CD4-positive, alpha-beta T cell (primary cell): ENCODE measurements at regions of chr12 and their contacts with region 1.

Region 1: DNA sequence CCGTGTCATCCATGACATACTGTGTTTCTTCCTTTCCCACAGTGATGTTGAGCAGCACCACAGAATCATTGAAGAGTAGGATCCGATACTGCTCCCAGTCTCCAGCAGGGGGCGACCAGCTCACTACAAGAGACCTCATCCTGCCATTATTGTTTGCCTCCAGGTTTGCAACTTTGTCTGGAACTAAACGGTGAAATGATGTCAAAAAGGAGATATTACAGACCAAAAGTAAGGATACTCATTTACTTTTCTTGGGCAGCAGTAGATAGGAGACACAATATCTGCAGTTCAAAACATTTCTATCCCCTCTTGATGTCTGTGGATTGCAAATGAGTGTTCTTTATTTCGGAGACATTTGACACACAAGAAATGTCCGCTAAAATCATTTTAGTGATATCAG is 47.2 kb downstream of the PTPRB start:
- DNase-seq: peak; percentile 7 to 60 (median 32)
- ATAC-seq: peak; percentile 73
- H3K4me3 ChIP-seq: no peak overlapping the region
- H3K4me3 Mint-ChIP-seq: no peak overlapping the region
- H3K27ac ChIP-seq: no peak overlapping the region
- H3K27ac Mint-ChIP-seq: no peak overlapping the region
- H3K4me1 ChIP-seq: no peaks in the 10 kb centered on the region
- H3K4me1 Mint-ChIP-seq: no peaks in the 10 kb centered on the region
- H3K27me3 ChIP-seq: peaks cover 0 to 5% of the 10 kb centered on the region in 2 experiments
- H3K27me3 Mint-ChIP-seq: peaks cover 33% of the 10 kb centered on the region
- CTCF ChIP-seq: peak; percentile 75

Region 2: DNA sequence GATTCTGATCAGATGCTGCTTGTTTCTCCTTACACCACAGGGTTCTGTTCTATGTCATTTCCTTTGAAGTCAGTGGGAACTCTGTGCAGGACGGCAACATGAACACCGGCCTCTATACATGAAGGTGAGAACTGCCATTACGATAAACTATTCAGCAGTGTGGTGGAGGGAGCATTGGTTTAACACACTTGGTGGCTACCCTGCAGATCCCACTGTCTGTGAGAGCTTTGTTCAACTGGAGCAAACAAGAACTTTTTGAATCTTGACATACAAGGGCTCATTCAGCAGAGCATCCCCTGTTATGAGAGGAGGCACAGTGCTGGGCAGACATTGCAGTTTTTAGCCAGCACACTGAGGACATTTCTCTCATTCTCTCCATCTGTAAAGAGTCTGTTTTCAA is 1130.6 kb before region 1 on chr12:
- CTCF ChIA-PET with region 1: no interaction called
- POLR2A ChIA-PET with region 1: no interaction called
- intact Hi-C with region 1: no loop called
- DNase-seq: no peak
- ATAC-seq: no peak
- H3K4me3 ChIP-seq: no peak overlapping the region
- H3K4me3 Mint-ChIP-seq: no peak overlapping the region
- H3K27ac ChIP-seq: no peak overlapping the region
- H3K27ac Mint-ChIP-seq: no peak overlapping the region
- H3K4me1 ChIP-seq: no peaks in the 10 kb centered on the region
- H3K4me1 Mint-ChIP-seq: no peaks in the 10 kb centered on the region
- H3K27me3 ChIP-seq: peaks cover 0 to 2% of the 10 kb centered on the region in 2 experiments
- H3K27me3 Mint-ChIP-seq: peaks cover 5% of the 10 kb centered on the region
- CTCF ChIP-seq: no peak

Region 3: GRCh38 chr12:69608114-69608513 is 981.9 kb before region 1 on chr12:
- CTCF ChIA-PET with region 1: no interaction called
- POLR2A ChIA-PET with region 1: no interaction called
- intact Hi-C with region 1: no loop called
- DNase-seq: no peak
- ATAC-seq: no peak
- H3K4me3 ChIP-seq: no peak overlapping the region
- H3K4me3 Mint-ChIP-seq: no peak overlapping the region
- H3K27ac ChIP-seq: no peak overlapping the region
- H3K27ac Mint-ChIP-seq: no peak overlapping the region
- H3K4me1 ChIP-seq: no peaks in the 10 kb centered on the region
- H3K4me1 Mint-ChIP-seq: no peaks in the 10 kb centered on the region
- H3K27me3 ChIP-seq: no peaks in the 10 kb centered on the region
- H3K27me3 Mint-ChIP-seq: no peaks in the 10 kb centered on the region
- CTCF ChIP-seq: no peak

Region 4: DNA sequence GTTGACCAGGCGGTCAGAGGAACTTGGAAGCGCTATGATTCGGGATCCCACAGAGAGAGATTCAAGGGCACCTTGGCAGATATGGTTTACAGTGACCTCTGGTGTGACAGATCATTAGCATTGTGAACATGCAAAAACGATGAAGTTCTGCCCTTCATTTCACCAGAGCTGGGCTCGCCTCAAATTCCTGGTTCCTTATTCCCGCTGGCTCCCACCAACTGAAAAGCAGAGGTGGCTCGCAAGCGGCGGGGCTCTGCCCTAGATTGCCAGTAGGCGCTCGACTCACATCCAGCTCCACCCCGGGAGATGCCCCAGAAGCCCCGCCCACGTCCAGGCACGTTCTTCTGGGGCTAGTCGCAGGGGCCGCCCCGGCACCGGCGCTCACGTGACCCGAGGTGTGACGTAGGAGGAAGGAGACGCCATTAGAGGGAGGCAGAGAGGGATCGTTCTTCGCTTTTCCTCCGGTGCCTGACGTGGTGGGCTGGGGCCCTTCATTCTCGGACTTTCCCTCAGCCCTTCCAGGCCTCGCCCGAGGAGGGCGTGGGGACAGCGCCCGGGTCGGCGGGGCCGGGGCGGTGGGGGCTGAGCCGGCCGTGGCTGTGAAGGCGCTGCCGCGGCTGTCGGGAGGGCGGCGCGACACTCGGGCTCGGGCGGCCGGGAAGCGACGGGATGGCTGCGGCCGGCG is 1164.6 kb after region 1 on chr12 and contains the start of gene RAB21:
- CTCF ChIA-PET with region 1: no interaction called
- POLR2A ChIA-PET with region 1: no interaction called
- intact Hi-C with region 1: loop called (anchors 5 to 10 kb)
- DNase-seq: peak; percentile 96 to 99 (median 98)
- ATAC-seq: peak; percentile 91
- H3K4me3 ChIP-seq: peak within 1 kb of the TSS; percentile 99
- H3K4me3 Mint-ChIP-seq: peak within 1 kb of the TSS; percentile 100
- H3K27ac ChIP-seq: peak within 1 kb of the TSS; percentile 84 to 97
- H3K27ac Mint-ChIP-seq: peak within 1 kb of the TSS; percentile 99
- H3K4me1 ChIP-seq: peaks cover 30% of the 10 kb centered on the region
- H3K4me1 Mint-ChIP-seq: peaks cover 46% of the 10 kb centered on the region
- H3K27me3 ChIP-seq: no peaks in the 10 kb centered on the region
- H3K27me3 Mint-ChIP-seq: peaks cover 26% of the 10 kb centered on the region
- CTCF ChIP-seq: peak; percentile 28
- total RNA-seq, gene RAB21: 106 to 108 TPM

Region 5: DNA sequence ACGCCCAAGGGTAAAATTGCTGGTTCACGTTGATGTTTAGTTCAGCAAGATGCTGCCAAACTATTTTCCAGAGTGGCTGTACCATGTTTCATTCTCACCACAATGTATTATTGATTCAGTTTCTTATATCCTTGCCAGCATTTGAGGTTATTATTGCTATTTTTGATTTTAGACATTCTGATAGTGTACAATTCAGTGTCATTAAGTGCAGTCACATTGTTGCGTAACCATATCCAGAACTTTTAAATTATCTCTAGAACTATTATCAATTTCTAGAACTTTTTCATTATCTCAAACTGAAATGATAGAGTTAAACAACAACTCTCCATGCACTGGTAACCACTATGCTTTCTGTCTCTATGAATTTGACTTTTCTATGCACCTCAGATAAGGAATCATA is 1238.8 kb after region 1 on chr12:
- CTCF ChIA-PET with region 1: no interaction called
- POLR2A ChIA-PET with region 1: no interaction called
- intact Hi-C with region 1: loop called in 1 of 2 experiments (anchors 5 kb)
- DNase-seq: no peak
- ATAC-seq: no peak
- H3K4me3 ChIP-seq: no peak overlapping the region
- H3K4me3 Mint-ChIP-seq: no peak overlapping the region
- H3K27ac ChIP-seq: no peak overlapping the region
- H3K27ac Mint-ChIP-seq: no peak overlapping the region
- H3K4me1 ChIP-seq: no peaks in the 10 kb centered on the region
- H3K4me1 Mint-ChIP-seq: no peaks in the 10 kb centered on the region
- H3K27me3 ChIP-seq: no peaks in the 10 kb centered on the region
- H3K27me3 Mint-ChIP-seq: peaks cover 23% of the 10 kb centered on the region
- CTCF ChIP-seq: no peak